Naive thymus-derived CD4-positive, alpha-beta T cell (primary cell): ENCODE measurements at regions of chrX and their contacts with region 1.

Region 1: DNA sequence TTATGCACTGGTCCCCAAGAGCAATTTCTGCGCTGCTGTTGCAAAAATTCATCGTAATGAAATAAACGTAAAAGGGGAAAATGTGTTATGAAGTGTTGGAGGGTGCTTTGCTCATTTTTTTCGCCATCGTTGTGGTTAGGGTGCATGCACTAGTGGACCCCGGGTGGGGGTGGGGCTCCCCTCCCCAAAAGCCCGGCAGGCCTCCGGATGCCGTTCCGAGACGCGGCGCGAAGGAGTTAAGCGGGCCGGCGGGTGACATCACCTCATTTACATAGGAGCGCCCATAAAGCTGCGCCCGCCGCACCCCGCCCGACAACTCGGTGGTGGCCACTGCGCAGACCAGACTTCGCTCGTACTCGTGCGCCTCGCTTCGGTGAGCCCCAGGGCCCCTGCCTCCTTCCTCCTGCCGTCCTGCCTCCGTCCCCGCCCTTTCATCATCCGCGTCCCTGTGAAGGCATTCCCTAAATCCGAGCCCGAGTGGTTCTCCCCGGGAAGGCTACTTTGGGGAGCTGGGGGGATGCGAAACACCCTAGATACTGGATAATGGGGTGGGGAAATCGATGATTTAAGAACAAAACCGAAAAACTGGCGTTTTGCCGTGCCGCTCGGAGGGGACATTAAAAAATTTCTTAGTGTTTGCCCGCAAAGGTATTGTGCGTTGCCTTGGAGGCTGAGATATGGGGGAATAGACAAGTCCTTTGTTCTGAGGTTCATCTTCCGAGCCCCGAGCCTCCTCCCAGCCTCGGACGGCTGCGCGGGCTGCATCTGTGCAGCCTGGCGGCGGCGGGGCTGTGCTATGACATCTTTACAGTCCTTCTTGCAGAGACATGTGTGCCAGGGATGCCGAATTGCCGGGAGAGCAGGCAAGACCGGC is at the start of gene TMSB4X:
- DNase-seq: peak; percentile 69 to 87 (median 81)
- ATAC-seq: peak; percentile 75
- H3K4me3 ChIP-seq: peak within 1 kb of the TSS; percentile 97
- H3K4me3 Mint-ChIP-seq: peak within 1 kb of the TSS; percentile 92 to 99 (median 96)
- H3K27ac ChIP-seq: peak within 1 kb of the TSS; percentile 93
- H3K27ac Mint-ChIP-seq: peak within 1 kb of the TSS; percentile 92 to 99 (median 97)
- H3K4me1 ChIP-seq: peaks cover 5 to 19% of the 10 kb centered on the region in 2 donors
- H3K4me1 Mint-ChIP-seq: peaks cover 6 to 57% (median 24%) of the 10 kb centered on the region in 7 donors
- H3K27me3 ChIP-seq: no peaks in the 10 kb centered on the region
- H3K27me3 Mint-ChIP-seq: peaks cover 0 to 8% (median 0%) of the 10 kb centered on the region in 5 donors
- total RNA-seq, gene TMSB4X: 3,911 to 13,454 (median 4,935) TPM

Region 2: GRCh38 chrX:12955882-12956703 is 18.9 kb before region 1 on chrX:
- CTCF ChIA-PET with region 1: interaction called, 102 read pairs
- POLR2A ChIA-PET with region 1: interaction called, 1,267 read pairs
- intact Hi-C with region 1: loop called (anchors 1 kb)
- DNase-seq: peak in 3 of 9 donors; percentile 43 to 73 (median 65)
- ATAC-seq: peak; percentile 58
- H3K4me3 ChIP-seq: peak overlapping the region; percentile 66
- H3K4me3 Mint-ChIP-seq: peak overlapping the region; percentile 77 to 94 (median 88)
- H3K27ac ChIP-seq: peak overlapping the region; percentile 83
- H3K27ac Mint-ChIP-seq: peak overlapping the region; percentile 96 to 99 (median 97)
- H3K4me1 ChIP-seq: peaks cover 68 to 72% of the 10 kb centered on the region in 2 donors
- H3K4me1 Mint-ChIP-seq: peaks cover 20 to 90% (median 71%) of the 10 kb centered on the region in 7 donors
- H3K27me3 ChIP-seq: no peaks in the 10 kb centered on the region
- H3K27me3 Mint-ChIP-seq: no peaks in the 10 kb centered on the region

Region 3: GRCh38 chrX:13013363-13014110 is 38.5 kb after region 1 on chrX:
- CTCF ChIA-PET with region 1: interaction called, 6 read pairs
- POLR2A ChIA-PET with region 1: interaction called, 873 read pairs
- intact Hi-C with region 1: loop called (anchors 5 kb)
- DNase-seq: peak in 5 of 9 donors; percentile 16 to 45 (median 34)
- ATAC-seq: peak; percentile 85
- H3K4me3 ChIP-seq: peak overlapping the region; percentile 31
- H3K4me3 Mint-ChIP-seq: peak overlapping the region; percentile 20 to 75 (median 58)
- H3K27ac ChIP-seq: peak overlapping the region; percentile 65
- H3K27ac Mint-ChIP-seq: peak overlapping the region; percentile 80 to 92 (median 87)
- H3K4me1 ChIP-seq: peaks cover 6 to 44% of the 10 kb centered on the region in 2 donors
- H3K4me1 Mint-ChIP-seq: peaks cover 16 to 80% (median 68%) of the 10 kb centered on the region in 7 donors
- H3K27me3 ChIP-seq: no peaks in the 10 kb centered on the region
- H3K27me3 Mint-ChIP-seq: no peaks in the 10 kb centered on the region

Region 4: GRCh38 chrX:13046141-13046855 is 71.3 kb after region 1 on chrX:
- CTCF ChIA-PET with region 1: interaction called, 9 read pairs
- POLR2A ChIA-PET with region 1: interaction called, 197 read pairs
- intact Hi-C with region 1: loop called (anchors 1 to 2 kb)
- DNase-seq: no peak
- ATAC-seq: no peak
- H3K4me3 ChIP-seq: no peak overlapping the region
- H3K4me3 Mint-ChIP-seq: peak overlapping the region in 5 of 10 donors; percentile 3 to 58 (median 23)
- H3K27ac ChIP-seq: no peak overlapping the region
- H3K27ac Mint-ChIP-seq: peak overlapping the region in 8 of 9 donors; percentile 20 to 89 (median 60)
- H3K4me1 ChIP-seq: peaks cover 20 to 60% of the 10 kb centered on the region in 2 donors
- H3K4me1 Mint-ChIP-seq: peaks cover 6 to 71% (median 61%) of the 10 kb centered on the region in 7 donors
- H3K27me3 ChIP-seq: no peaks in the 10 kb centered on the region
- H3K27me3 Mint-ChIP-seq: no peaks in the 10 kb centered on the region

Region 5: DNA sequence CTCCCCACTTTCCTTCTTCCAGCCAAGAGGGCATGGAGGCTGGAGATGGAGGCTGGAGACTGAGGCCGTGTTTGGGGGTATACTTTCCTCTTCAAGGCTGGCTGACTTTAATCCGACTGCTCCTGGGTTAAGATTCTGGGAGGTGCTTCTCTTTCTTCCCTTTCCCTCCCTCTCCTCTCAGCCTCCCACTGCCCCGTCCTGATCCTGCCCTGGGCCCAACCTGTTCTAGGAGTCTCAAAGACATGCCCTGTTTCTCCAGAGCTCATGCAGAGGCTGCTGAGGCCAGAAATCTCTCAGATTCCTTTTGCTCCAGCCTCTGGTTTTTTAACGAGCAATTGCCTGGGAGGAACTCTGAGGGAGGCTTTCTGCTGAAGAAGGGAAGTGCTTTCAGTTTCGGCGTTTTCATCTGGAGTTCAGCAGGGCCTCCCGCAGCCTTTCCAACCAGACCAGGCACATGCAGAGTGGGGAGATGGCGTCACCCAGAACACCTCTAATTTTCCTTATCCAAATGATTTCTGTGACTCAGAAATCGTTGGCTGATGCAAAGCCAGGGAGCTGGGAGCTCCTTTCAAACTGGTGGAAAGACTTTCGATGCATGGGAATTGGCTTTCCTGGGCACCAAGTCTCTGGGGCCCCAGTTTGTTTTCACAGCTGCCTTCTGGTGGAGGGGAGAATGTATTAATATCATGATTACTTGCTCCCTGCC is 103.9 kb after region 1 on chrX:
- CTCF ChIA-PET with region 1: interaction called, 3 read pairs
- POLR2A ChIA-PET with region 1: interaction called, 1,322 read pairs
- intact Hi-C with region 1: no loop called
- DNase-seq: no peak
- ATAC-seq: no peak
- H3K4me3 ChIP-seq: peak overlapping the region; percentile 54
- H3K4me3 Mint-ChIP-seq: peak overlapping the region; percentile 59 to 79 (median 74)
- H3K27ac ChIP-seq: peak overlapping the region; percentile 88
- H3K27ac Mint-ChIP-seq: peak overlapping the region; percentile 90 to 99 (median 95)
- H3K4me1 ChIP-seq: peaks cover 55 to 92% of the 10 kb centered on the region in 2 donors
- H3K4me1 Mint-ChIP-seq: peaks cover 42 to 98% (median 89%) of the 10 kb centered on the region in 7 donors
- H3K27me3 ChIP-seq: no peaks in the 10 kb centered on the region
- H3K27me3 Mint-ChIP-seq: no peaks in the 10 kb centered on the region

Region 6: GRCh38 chrX:13340182-13340791 is 365.3 kb after region 1 on chrX:
- CTCF ChIA-PET with region 1: no interaction called
- POLR2A ChIA-PET with region 1: no interaction called
- intact Hi-C with region 1: no loop called
- DNase-seq: no peak
- ATAC-seq: no peak
- H3K4me3 ChIP-seq: no peak overlapping the region
- H3K4me3 Mint-ChIP-seq: no peak overlapping the region
- H3K27ac ChIP-seq: no peak overlapping the region
- H3K27ac Mint-ChIP-seq: no peak overlapping the region
- H3K4me1 ChIP-seq: no peaks in the 10 kb centered on the region
- H3K4me1 Mint-ChIP-seq: no peaks in the 10 kb centered on the region
- H3K27me3 ChIP-seq: no peaks in the 10 kb centered on the region
- H3K27me3 Mint-ChIP-seq: no peaks in the 10 kb centered on the region

Region 7: DNA sequence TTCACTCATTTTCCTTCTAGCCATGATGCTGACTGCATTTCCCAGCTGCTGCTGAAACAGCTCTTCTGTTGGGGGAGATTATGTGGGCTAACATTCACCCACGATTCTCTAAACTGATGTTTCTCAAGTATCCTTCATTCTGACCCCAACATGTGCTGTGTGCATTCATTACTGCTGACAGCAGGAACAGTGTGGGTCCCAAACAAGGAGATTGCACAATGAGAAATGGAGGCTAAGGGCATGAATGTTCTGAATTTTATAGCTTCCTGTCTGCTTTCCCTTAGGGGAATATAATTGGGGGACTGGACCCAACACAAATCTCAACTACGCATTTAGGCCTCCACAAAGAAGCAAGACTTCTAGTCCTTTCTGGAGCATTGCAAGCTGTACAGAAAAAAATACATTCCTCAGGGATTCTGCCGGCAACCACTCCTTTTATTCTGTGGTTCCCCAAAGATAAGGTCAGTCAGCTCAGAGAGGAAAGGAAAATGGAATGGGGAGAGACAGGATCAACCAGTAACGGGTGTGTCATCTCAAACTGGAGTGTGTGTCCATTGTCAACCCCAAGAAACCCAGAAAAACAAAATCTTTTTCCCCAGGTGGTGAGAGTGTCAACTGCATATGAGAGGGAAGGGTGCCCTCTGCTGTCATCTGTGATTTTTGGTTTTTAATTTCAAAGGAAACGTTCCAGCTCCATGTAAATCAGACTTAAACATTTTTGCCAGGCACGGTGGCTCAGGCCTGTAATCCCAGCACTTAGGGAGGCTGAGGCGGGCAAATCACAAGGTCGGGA is 512.9 kb after region 1 on chrX:
- CTCF ChIA-PET with region 1: interaction called, 8 read pairs
- POLR2A ChIA-PET with region 1: interaction called, 22 read pairs
- intact Hi-C with region 1: loop called in 1 of 2 experiments (anchors 1 kb)
- DNase-seq: peak in 8 of 9 donors; percentile 22 to 73 (median 52)
- ATAC-seq: peak; percentile 79
- H3K4me3 ChIP-seq: no peak overlapping the region
- H3K4me3 Mint-ChIP-seq: peak overlapping the region in 2 of 10 donors; percentile 11 to 48
- H3K27ac ChIP-seq: no peak overlapping the region
- H3K27ac Mint-ChIP-seq: peak overlapping the region in 8 of 9 donors; percentile 23 to 87 (median 64)
- H3K4me1 ChIP-seq: peaks cover 11 to 27% of the 10 kb centered on the region in 2 donors
- H3K4me1 Mint-ChIP-seq: peaks cover 4 to 39% (median 27%) of the 10 kb centered on the region in 7 donors
- H3K27me3 ChIP-seq: no peaks in the 10 kb centered on the region
- H3K27me3 Mint-ChIP-seq: no peaks in the 10 kb centered on the region